CD4-positive, alpha-beta T cell (primary cell): ENCODE measurements at regions of chr9 and their contacts with region 1.

Region 1: DNA sequence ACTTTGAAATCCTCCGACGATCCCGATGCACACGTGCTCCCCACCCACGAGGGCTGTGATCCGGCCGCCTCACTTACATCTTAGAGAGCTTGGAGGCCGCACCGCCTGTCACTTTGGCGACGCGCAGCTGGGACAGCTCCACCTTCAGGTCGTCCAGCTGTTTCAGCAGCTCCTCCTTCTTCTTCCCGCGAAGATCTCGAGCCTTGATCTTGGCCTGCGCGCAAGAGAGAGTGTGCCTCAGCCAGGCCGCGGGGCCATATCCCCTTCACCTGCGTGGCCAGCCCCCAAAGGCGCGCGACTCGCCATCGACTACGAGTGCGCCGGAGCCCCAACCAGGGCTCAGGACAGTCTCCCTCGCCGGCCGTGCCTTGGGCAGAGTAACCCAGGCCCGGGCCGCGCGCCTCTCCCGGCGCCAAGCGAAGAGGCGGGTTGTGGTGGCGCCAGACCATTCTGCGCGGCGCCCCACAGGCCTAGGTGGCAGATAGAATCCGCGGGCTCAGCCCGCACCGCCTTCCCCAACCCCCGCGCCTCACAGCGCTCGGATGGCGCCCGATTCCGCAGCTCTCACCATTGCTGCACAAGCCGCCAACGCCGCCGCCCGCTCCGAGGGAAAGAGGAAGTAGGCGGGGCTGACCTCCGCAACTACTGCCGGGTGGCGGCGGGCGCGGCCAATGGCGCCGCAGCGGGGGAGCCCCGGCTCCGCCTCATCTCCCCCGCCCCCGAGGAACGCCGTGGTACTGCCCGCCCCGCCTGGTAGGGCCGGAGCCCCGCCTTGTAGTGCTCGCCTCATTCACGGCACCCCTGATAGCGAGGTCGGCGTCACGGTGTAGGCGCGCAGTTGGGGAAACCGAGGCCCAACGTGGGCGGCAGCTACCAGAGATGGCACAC is at the starts of genes ARPC5L and RPL35:
- DNase-seq: peak; percentile 91 to 98 (median 95)
- ATAC-seq: peak; percentile 92
- H3K4me3 ChIP-seq: peak within 1 kb of the TSS; percentile 89
- H3K4me3 Mint-ChIP-seq: peak within 1 kb of the TSS; percentile 96
- H3K27ac ChIP-seq: peak within 1 kb of the TSS; percentile 89 to 92
- H3K27ac Mint-ChIP-seq: peak within 1 kb of the TSS; percentile 92
- H3K4me1 ChIP-seq: peaks cover 46% of the 10 kb centered on the region
- H3K4me1 Mint-ChIP-seq: peaks cover 38% of the 10 kb centered on the region
- H3K27me3 ChIP-seq: no peaks in the 10 kb centered on the region
- H3K27me3 Mint-ChIP-seq: no peaks in the 10 kb centered on the region
- CTCF ChIP-seq: peak; percentile 23
- total RNA-seq, gene ARPC5L: 36.8 to 37.0 TPM
- total RNA-seq, gene RPL35: 2,088 to 2,142 TPM

Region 2: GRCh38 chr9:124771021-124771866 is 90.3 kb before region 1 on chr9 and contains the start of gene NR6A1:
- CTCF ChIA-PET with region 1: interaction called, 106 read pairs
- POLR2A ChIA-PET with region 1: interaction called, 21 read pairs
- intact Hi-C with region 1: loop called in 1 of 2 experiments (anchors 1 kb)
- DNase-seq: peak; percentile 81 to 97 (median 90)
- ATAC-seq: peak; percentile 88
- H3K4me3 ChIP-seq: peak within 1 kb of the TSS; percentile 59
- H3K4me3 Mint-ChIP-seq: peak within 1 kb of the TSS; percentile 90
- H3K27ac ChIP-seq: no peak within 1 kb of the TSS
- H3K27ac Mint-ChIP-seq: peak within 1 kb of the TSS; percentile 32
- H3K4me1 ChIP-seq: peaks cover 32% of the 10 kb centered on the region
- H3K4me1 Mint-ChIP-seq: peaks cover 39% of the 10 kb centered on the region
- H3K27me3 ChIP-seq: peaks cover 34 to 71% of the 10 kb centered on the region in 2 experiments
- H3K27me3 Mint-ChIP-seq: peaks cover 87% of the 10 kb centered on the region
- CTCF ChIP-seq: no peak
- total RNA-seq, gene NR6A1: not detected

Region 3: GRCh38 chr9:124879226-124879625 is 17.6 kb after region 1 on chr9:
- CTCF ChIA-PET with region 1: interaction called, 4 read pairs
- POLR2A ChIA-PET with region 1: interaction called, 10 read pairs
- intact Hi-C with region 1: no loop called
- DNase-seq: no peak
- ATAC-seq: no peak
- H3K4me3 ChIP-seq: no peak overlapping the region
- H3K4me3 Mint-ChIP-seq: no peak overlapping the region
- H3K27ac ChIP-seq: no peak overlapping the region
- H3K27ac Mint-ChIP-seq: no peak overlapping the region
- H3K4me1 ChIP-seq: peaks cover 17% of the 10 kb centered on the region
- H3K4me1 Mint-ChIP-seq: no peaks in the 10 kb centered on the region
- H3K27me3 ChIP-seq: no peaks in the 10 kb centered on the region
- H3K27me3 Mint-ChIP-seq: no peaks in the 10 kb centered on the region
- CTCF ChIP-seq: no peak

Region 4: GRCh38 chr9:125003332-125003731 is 141.7 kb after region 1 on chr9:
- CTCF ChIA-PET with region 1: no interaction called
- POLR2A ChIA-PET with region 1: no interaction called
- intact Hi-C with region 1: no loop called
- DNase-seq: no peak
- ATAC-seq: no peak
- H3K4me3 ChIP-seq: no peak overlapping the region
- H3K4me3 Mint-ChIP-seq: no peak overlapping the region
- H3K27ac ChIP-seq: no peak overlapping the region
- H3K27ac Mint-ChIP-seq: no peak overlapping the region
- H3K4me1 ChIP-seq: no peaks in the 10 kb centered on the region
- H3K4me1 Mint-ChIP-seq: no peaks in the 10 kb centered on the region
- H3K27me3 ChIP-seq: no peaks in the 10 kb centered on the region
- H3K27me3 Mint-ChIP-seq: no peaks in the 10 kb centered on the region
- CTCF ChIP-seq: no peak

Region 5: DNA sequence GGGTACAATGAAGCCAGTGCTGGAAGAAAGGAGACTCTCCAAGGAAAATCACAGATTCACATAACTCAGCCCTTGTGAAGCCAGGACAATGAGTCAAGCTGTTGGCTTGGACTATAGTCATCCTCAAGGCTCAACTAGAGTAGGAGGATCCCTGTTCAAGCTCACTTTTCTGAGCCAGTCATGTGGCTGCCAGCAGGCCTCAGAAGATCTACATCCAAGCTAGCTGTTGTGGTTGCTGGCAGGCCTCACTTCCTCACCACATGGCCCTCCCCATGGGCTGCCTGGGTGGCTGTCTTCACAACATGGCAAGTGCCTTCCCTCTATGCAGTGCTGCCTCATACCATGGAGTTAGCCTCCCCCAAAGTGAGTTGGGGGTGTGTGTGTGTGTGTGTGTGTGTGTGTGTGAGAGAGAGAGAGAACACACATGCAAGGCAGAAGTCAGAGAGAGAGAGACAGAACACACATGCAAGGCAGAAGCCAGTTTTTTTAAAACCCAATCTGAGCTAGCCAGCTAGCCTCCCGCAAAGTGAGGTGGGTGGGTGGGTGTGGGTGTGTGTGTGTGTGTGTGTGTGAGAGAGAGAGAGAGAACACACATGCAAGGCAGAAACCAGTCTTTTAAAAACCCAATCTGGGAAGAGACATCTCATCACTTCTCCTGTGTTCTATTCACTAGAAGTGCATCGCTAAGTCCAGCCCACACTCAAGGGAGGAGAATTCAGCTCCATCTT is 264.6 kb after region 1 on chr9:
- CTCF ChIA-PET with region 1: no interaction called
- POLR2A ChIA-PET with region 1: interaction called, 3 read pairs
- intact Hi-C with region 1: loop called in 1 of 2 experiments (anchors 10 kb)
- DNase-seq: peak; percentile 66 to 94 (median 78)
- ATAC-seq: peak; percentile 99
- H3K4me3 ChIP-seq: no peak overlapping the region
- H3K4me3 Mint-ChIP-seq: peak overlapping the region; percentile 83
- H3K27ac ChIP-seq: peak overlapping the region in 1 of 2 donors; percentile 6
- H3K27ac Mint-ChIP-seq: peak overlapping the region; percentile 89
- H3K4me1 ChIP-seq: peaks cover 30% of the 10 kb centered on the region
- H3K4me1 Mint-ChIP-seq: peaks cover 44% of the 10 kb centered on the region
- H3K27me3 ChIP-seq: no peaks in the 10 kb centered on the region
- H3K27me3 Mint-ChIP-seq: no peaks in the 10 kb centered on the region
- CTCF ChIP-seq: no peak